Motor neuron (in vitro differentiated cells): ENCODE measurements at regions of chr19 and their contacts with region 1.

Region 1: DNA sequence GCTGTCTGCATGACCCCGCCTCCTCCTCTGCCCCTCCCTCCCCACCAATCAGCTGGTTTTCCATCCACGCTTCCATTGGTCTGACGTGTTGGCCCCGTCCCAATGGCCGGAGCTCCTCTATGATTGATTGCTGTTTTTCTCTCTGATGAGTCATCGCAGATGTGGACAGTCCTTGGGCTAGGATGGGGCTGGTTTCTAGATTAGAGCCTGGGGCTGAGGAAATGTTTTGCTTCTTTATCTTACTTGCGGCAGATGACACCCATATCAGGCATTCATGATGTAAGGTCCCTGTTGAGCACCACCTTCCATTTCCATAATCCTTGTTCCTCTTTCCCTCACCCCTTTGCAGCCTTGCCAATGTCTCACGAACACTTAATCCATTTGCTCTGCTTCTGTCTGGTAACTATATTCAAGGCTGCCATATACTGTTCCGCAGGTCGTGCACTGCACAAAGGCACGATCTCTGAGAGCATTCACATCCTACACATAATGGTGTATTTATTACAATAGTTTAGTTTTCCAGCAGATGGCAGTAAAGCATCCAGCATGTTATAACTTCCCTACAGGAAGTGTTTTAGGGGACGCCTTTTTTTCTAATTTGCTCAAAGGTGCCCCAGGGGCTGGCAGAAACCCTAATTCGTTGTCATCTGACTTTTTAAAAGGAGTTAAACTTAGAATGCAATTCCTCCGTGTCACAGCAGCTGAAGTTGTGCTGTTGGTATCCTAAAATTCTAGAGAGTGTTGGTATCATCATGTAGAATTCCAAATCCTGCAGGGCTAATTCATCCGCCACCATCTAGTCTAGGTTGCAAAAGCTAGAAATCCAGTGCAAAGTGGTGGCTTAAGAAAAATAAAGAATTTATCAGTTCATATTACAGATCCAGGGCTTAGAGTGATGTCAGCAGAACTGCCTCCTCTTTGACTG is 73.5 kb downstream of the MAP4K1 start:
- ATAC-seq: peak; percentile 87 to 96 (median 95)
- H3K4me3 ChIP-seq: no peak overlapping the region
- H3K27ac ChIP-seq: peak overlapping the region in 1 of 2 donors; percentile 54
- H3K4me1 ChIP-seq: no peaks in the 10 kb centered on the region

Region 2: DNA sequence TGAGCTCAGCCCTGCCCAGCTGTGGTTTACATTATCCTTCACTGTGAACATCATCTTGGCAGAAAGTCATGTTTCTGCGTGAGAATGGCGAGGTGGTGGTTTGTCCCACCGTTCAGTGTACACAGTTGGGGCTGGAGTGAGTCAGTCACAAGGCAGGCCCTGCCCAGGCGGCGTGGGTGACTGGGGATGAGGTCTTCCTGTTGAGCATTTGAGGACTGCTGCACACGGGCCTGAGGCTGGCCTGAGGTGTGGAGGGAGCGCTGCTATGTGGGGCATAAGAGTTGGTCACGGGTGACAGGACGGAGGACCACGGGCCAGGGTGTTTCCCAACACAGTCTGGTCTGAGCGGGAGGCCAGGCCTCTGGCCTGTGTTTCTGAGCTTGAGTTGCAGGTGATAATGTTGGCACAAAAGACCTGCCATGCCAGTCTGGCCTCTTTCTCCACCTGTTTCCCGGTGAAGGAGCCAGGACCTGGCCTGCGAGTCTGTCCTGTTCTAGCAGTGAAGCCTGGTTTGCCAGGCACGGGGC is 253.6 kb before region 1 on chr19:
- in situ Hi-C with region 1: no loop called
- ATAC-seq: peak in 6 of 8 experiments; percentile 10 to 89 (median 50)
- H3K4me3 ChIP-seq: no peak overlapping the region
- H3K27ac ChIP-seq: no peak overlapping the region
- H3K4me1 ChIP-seq: peaks cover 11 to 14% of the 10 kb centered on the region in 2 donors

Region 3: DNA sequence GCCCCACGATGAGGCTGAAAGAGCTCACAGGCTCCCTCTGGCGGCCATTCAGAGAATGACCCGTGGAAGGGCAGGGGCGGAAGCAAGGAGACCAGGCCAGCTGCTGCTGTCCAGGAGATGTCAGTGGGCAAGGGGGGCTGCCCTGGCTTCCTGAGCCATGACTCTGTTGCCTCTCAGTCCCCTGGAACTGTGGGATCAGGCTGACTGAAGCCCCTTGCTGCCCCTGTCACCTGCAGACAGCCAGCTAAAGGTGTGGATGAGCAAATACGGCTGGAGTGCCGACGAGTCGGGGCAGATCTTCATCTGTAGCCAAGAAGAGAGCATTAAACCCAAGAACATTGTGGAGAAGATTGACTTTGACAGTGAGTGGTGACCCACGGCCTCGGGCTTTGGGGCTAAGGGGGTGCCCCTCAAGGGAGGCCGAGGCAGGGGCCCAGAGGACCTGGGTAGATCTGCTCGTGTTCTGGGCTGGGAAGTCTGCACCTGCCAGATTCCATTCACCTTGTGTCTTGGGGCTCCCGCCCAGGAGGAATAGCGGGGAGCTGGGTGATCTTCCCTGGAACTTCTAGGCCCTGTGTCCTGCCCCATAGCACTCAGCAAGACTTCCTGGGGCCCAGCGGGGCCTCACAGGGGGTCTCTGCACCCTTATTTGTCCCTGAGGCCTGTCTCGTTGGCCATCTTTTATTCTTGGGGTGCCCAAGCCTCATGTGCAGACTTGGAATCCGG is 90.6 kb after region 1 on chr19:
- in situ Hi-C with region 1: loop called in 1 of 9 experiments (anchors 10 kb)
- ATAC-seq: peak; percentile 13 to 77 (median 60)
- H3K4me3 ChIP-seq: no peak overlapping the region
- H3K27ac ChIP-seq: no peak overlapping the region
- H3K4me1 ChIP-seq: no peaks in the 10 kb centered on the region